GM10248 (cell line): ENCODE measurements at regions of chr11 and their contacts with region 1.

Region 1: GRCh38 chr11:9573052-9573774 is at the start of gene WEE1:
- DNase-seq: peak; percentile 98
- CTCF ChIP-seq: no peak

Region 2: GRCh38 chr11:9489080-9489765 is 84.0 kb before region 1 on chr11:
- CTCF ChIA-PET with region 1: no interaction called
- POLR2A ChIA-PET with region 1: no interaction called
- DNase-seq: no peak
- CTCF ChIP-seq: no peak

Region 3: GRCh38 chr11:9594267-9595046 is 21.2 kb after region 1 on chr11:
- CTCF ChIA-PET with region 1: interaction called, 13 read pairs
- POLR2A ChIA-PET with region 1: no interaction called
- DNase-seq: no peak
- CTCF ChIP-seq: no peak

Region 4: DNA sequence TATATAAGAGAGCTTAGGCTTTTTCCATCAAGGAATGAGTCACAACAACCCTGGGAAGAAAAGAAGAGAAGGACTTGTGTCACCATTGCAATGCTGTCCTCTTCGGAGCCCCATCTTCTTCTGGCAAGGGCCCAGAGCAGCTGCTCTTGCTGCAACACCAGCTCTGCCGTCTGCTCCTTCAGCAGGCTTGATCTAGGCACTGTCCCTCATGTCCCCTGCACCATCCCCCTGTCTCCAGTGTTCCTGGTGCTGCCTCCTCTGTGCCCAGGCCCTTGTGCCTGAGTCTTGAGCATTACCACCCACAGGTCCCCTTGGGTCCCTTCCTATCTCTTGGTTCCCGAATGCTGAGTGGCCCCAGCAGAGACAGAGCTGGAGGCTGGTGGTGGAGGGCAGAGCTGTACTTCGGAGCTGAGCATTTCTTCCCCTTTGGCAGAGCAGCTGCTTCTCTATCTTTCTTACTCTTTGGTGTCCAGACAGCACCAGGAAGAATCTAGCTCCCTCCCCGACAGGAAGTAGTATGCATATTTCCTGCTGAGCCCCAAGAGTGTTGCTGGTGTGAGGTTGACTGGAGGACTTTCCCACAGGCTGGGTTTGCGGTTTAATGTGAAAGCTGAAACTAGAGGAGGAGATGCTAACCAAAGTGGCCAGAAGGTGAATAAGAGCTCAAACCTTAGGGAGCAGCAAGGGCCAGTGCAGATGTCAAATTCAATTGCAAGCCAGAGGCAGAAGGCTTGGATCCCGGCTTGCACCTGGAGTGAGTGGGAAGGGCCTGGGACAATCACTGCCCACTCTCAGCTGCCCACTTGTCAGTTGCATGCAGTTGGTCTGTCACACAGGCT is 28.0 kb after region 1 on chr11:
- CTCF ChIA-PET with region 1: interaction called, 21 read pairs
- POLR2A ChIA-PET with region 1: interaction called, 5 read pairs
- DNase-seq: peak; percentile 73
- CTCF ChIP-seq: no peak